ENCODE measurements at regions of chr14 and their contacts with region 1.

Region 1: GRCh38 chr14:31489691-31490090 is 1.9 kb upstream of the GPR33 start:
- H3K4me3 Mint-ChIP-seq: no peak overlapping the region
- H3K27ac Mint-ChIP-seq: peak overlapping the region; percentile 67
- H3K4me1 Mint-ChIP-seq: peaks cover 57% of the 10 kb centered on the region
- H3K27me3 Mint-ChIP-seq: peaks cover 22% of the 10 kb centered on the region

Region 2: DNA sequence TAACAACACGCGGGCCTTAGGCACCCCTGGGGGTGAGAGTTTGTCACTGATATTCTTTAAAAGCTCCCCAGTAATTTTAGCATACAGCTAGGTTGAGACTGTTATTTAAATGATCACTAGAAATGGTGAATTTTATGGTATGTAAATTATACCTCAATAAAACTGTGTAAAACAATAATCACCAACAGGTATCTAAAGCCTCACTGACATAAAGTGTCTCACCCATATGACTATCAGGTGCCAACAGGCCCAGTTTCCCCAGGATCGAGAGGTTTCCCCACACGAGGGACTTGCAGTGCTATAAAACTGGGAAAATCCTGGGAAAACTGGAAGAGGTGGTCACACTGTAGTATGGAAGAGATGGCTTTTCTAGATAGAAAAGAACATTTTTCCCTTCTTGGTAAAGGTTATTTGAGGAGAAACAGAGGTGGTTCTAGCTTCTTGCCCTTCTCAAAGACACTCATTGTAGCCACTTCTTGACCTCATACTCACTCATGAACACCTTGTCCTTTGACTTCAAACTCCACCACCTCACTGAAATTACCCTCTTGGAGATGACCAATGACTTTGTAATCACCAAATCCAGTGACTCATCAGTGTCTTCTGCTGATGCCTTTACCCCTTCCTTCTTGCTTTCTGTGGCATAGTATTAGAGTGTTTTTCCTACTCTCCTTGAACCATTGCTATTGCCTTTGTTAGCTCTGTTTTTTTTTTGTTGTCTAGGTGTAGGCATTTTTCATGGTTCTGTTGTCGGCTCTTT is 46.7 kb after region 1 on chr14:
- intact Hi-C with region 1: no loop called
- H3K4me3 Mint-ChIP-seq: no peak overlapping the region
- H3K27ac Mint-ChIP-seq: no peak overlapping the region
- H3K4me1 Mint-ChIP-seq: no peaks in the 10 kb centered on the region
- H3K27me3 Mint-ChIP-seq: peaks cover 3% of the 10 kb centered on the region

Region 3: GRCh38 chr14:31561155-31561846 is 71.6 kb after region 1 on chr14 and contains the start of gene NUBPL:
- intact Hi-C with region 1: loop called (anchors 5 kb)
- H3K4me3 Mint-ChIP-seq: peak within 1 kb of the TSS; percentile 97
- H3K27ac Mint-ChIP-seq: peak within 1 kb of the TSS; percentile 94
- H3K4me1 Mint-ChIP-seq: peaks cover 17% of the 10 kb centered on the region
- H3K27me3 Mint-ChIP-seq: peaks cover 6% of the 10 kb centered on the region